PC-9 (cell line): ENCODE measurements at regions of chr12 and their contacts with region 1.

Region 1: GRCh38 chr12:47904713-47905310 is at the start of gene VDR:
- DNase-seq: peak; percentile 74 to 77
- H3K4me3 ChIP-seq: peak within 1 kb of the TSS; percentile 81
- H3K27ac ChIP-seq: peak within 1 kb of the TSS; percentile 66
- H3K4me1 ChIP-seq: peaks cover 48% of the 10 kb centered on the region
- H3K27me3 ChIP-seq: no peaks in the 10 kb centered on the region
- CTCF ChIP-seq: no peak
- total RNA-seq, gene VDR: 7.5 and 12.3 TPM in 2 replicates

Region 2: DNA sequence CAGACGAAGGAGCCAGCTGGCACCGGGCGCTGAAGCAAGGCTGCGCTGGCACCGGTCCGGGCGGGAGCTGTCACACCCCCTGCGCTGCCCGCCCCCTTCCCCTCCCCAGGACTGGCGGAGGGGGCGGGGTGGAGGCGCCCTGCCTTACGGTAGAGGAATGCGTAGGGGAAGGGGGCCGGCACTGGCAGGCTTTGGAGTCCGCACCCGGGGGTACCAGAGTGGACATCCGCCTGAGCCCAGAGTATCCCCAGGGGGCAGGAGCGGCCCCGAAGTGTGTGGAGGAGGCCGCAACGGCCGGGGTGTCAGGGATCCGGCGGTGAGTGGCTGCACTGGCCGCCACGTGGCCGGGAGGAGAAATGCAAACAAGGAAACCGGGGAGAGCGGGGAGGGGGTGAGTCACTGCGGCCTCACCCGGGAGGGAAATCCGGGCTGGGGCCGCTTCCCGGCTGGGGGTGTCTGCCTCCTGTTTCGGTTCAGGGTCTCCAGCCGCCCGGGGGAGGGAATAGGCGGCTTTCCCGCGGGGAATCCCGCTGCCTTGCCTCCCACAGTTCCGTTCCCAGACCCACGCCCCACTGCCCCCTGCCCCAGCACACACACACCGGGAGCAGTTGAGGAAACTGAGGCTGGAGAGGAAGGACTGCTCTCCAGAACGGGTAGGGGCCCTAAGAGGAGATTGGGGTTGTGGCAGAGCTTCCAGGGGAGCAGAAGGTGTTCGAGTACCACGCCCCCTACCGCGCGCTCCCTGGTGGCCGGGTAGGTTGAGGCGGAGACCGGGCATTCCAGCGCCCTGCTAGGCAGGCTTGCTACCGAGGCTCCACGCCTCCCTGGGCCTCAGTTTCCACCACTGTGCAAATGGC is 145.8 kb before region 1 on chr12 and contains the start of gene RAPGEF3:
- CTCF ChIA-PET with region 1: interaction called, 16 read pairs
- POLR2A ChIA-PET with region 1: no interaction called
- intact Hi-C with region 1: no loop called
- DNase-seq: peak; percentile 81 to 86
- H3K4me3 ChIP-seq: peak within 1 kb of the TSS; percentile 75
- H3K27ac ChIP-seq: peak within 1 kb of the TSS; percentile 66
- H3K4me1 ChIP-seq: peaks cover 68% of the 10 kb centered on the region
- H3K27me3 ChIP-seq: no peaks in the 10 kb centered on the region
- CTCF ChIP-seq: peak; percentile 59
- total RNA-seq, gene RAPGEF3: 4.1 and 5.7 TPM in 2 replicates

Region 3: GRCh38 chr12:47963340-47964040 is 58.7 kb after region 1 on chr12 and contains the start of gene TMEM106C:
- CTCF ChIA-PET with region 1: no interaction called
- POLR2A ChIA-PET with region 1: no interaction called
- intact Hi-C with region 1: loop called (anchors 1 kb)
- DNase-seq: peak; percentile 72 to 89
- H3K4me3 ChIP-seq: peak within 1 kb of the TSS; percentile 85
- H3K27ac ChIP-seq: no peak within 1 kb of the TSS
- H3K4me1 ChIP-seq: peaks cover 6% of the 10 kb centered on the region; the same call in 1 of the 2 replicates
- H3K27me3 ChIP-seq: peaks cover 11% of the 10 kb centered on the region
- CTCF ChIP-seq: peak; percentile 95
- total RNA-seq, gene TMEM106C: 99.4 and 100 TPM in 2 replicates

Region 4: GRCh38 chr12:48105862-48106680 is 201.3 kb after region 1 on chr12 and contains the start of gene SENP1:
- CTCF ChIA-PET with region 1: no interaction called
- POLR2A ChIA-PET with region 1: no interaction called
- intact Hi-C with region 1: loop called (anchors 5 kb)
- DNase-seq: peak; percentile 61 to 84
- H3K4me3 ChIP-seq: peak within 1 kb of the TSS; percentile 76
- H3K27ac ChIP-seq: peak within 1 kb of the TSS; percentile 80
- H3K4me1 ChIP-seq: peaks cover 29% of the 10 kb centered on the region
- H3K27me3 ChIP-seq: no peaks in the 10 kb centered on the region
- CTCF ChIP-seq: no peak; the same call in 1 of the 2 replicates
- total RNA-seq, gene SENP1: 20.9 and 23.0 TPM in 2 replicates

Region 5: GRCh38 chr12:48618541-48618940 is 713.7 kb after region 1 on chr12:
- CTCF ChIA-PET with region 1: no interaction called
- POLR2A ChIA-PET with region 1: no interaction called
- intact Hi-C with region 1: loop called (anchors 5 kb)
- DNase-seq: peak; percentile 63 to 69
- H3K4me3 ChIP-seq: no peak overlapping the region
- H3K27ac ChIP-seq: no peak overlapping the region
- H3K4me1 ChIP-seq: no peaks in the 10 kb centered on the region
- H3K27me3 ChIP-seq: peaks cover 27% of the 10 kb centered on the region
- CTCF ChIP-seq: peak; percentile 97